Tibial artery (tissue), 4 donors: ENCODE measurements at regions of chr13 and their contacts with region 1.

Region 1: DNA sequence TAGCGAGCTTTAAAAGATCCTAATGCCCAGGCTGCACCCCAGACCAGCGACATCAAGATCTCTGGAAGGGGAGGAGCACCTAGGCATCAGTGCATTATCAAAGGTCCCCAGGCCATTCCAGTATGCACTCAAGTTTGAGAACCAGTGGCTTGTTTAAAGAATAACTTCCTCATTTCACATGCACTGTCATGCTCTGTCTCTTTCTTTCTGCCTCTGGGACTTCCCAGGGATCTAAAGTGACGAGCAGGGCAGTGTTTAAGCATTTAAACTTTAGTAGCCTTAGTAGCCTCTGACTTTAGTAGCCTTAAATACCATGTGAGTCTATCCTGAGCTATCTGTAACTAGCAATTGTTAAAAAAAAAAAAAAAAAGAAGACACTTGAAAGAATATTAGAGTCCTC is 8.9 kb upstream of the FARP1 start:
- DNase-seq: no peak
- H3K4me3 ChIP-seq: no peak overlapping the region
- H3K27ac ChIP-seq: no peak overlapping the region
- H3K4me1 ChIP-seq: no peaks in the 10 kb centered on the region
- H3K27me3 ChIP-seq: no peaks in the 10 kb centered on the region
- CTCF ChIP-seq: no peak

Region 2: GRCh38 chr13:97631158-97631557 is 502.8 kb before region 1 on chr13:
- intact Hi-C with region 1: no loop called
- DNase-seq: no peak
- H3K4me3 ChIP-seq: no peak overlapping the region
- H3K27ac ChIP-seq: no peak overlapping the region
- H3K4me1 ChIP-seq: peaks cover 0 to 3% (median 0%) of the 10 kb centered on the region in 4 donors
- H3K27me3 ChIP-seq: no peaks in the 10 kb centered on the region
- CTCF ChIP-seq: no peak

Region 3: DNA sequence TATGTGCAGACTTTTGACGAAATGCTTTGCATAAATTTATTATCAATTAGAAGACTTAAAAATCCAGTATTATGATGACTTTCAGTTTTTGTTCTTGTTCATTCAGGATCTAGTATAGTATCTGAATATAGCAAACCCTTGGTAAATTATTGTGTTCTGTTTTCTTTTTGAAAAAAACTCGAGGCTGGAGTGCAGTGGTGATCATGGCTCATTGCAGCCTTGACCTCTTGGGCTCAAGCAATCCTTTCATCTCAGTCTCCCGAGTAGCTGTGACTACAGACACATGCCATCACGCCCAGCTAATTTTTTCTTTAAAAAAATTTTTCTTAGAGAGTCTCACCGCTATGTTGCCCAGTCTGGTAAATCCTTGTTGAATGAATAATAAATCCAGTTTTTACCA is 13.6 kb after region 1 on chr13:
- intact Hi-C with region 1: no loop called
- DNase-seq: no peak
- H3K4me3 ChIP-seq: no peak overlapping the region
- H3K27ac ChIP-seq: no peak overlapping the region
- H3K4me1 ChIP-seq: peaks cover 0 to 27% (median 18%) of the 10 kb centered on the region in 4 donors
- H3K27me3 ChIP-seq: no peaks in the 10 kb centered on the region
- CTCF ChIP-seq: no peak

Region 4: DNA sequence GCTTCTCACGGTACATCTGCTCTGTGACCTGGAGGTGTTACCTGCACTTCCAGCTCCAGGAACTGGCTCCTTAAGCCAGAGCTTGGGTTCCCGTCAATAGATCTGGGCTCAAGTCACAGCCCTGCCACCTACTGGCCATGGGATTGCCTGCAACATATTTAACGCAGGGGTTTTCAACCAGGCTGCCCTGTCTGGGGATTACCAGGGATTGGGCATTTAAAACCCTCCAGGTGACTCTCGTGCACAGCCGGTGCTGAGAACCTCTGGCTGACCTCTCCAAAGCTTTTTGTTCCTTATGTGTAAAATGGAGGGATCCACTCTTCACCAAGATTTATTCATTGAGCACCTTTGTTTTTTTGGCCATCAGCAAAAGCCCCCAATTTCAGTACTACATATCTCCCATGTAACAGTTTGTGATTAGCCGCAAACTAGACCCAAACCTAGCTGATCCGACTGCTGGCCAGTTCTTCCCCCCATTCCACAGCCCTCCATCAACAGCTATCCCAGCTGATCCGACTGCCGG is 519.6 kb after region 1 on chr13:
- intact Hi-C with region 1: loop called (anchors 10 kb)
- DNase-seq: peak; percentile 80 to 85
- H3K4me3 ChIP-seq: no peak overlapping the region
- H3K27ac ChIP-seq: no peak overlapping the region
- H3K4me1 ChIP-seq: no peaks in the 10 kb centered on the region
- H3K27me3 ChIP-seq: peaks cover 0 to 4% of the 10 kb centered on the region in 2 donors
- CTCF ChIP-seq: peak; percentile 89 to 90

Region 5: GRCh38 chr13:99689955-99690354 is 1556.0 kb after region 1 on chr13:
- intact Hi-C with region 1: no loop called
- DNase-seq: no peak
- H3K4me3 ChIP-seq: no peak overlapping the region
- H3K27ac ChIP-seq: no peak overlapping the region
- H3K4me1 ChIP-seq: peaks cover 0 to 18% (median 9%) of the 10 kb centered on the region in 4 donors
- H3K27me3 ChIP-seq: no peaks in the 10 kb centered on the region
- CTCF ChIP-seq: no peak